GM12878 (cell line): ENCODE measurements at regions of chr5 and their contacts with region 1.

Region 1: GRCh38 chr5:71782771-71783770 is 64.0 kb downstream of the CARTPT start:
- DNase-seq: peak; percentile 60
- ATAC-seq: peak; percentile 95
- H3K4me3 ChIP-seq: peak overlapping the region; percentile 1; the same call in 1 of the 2 replicates
- H3K27ac ChIP-seq: no peak overlapping the region; the same call in 1 of the 2 replicates
- H3K4me1 ChIP-seq: peaks cover 15% of the 10 kb centered on the region
- H3K27me3 ChIP-seq: no peaks in the 10 kb centered on the region; a peak in 1 of 4 replicates
- CTCF ChIP-seq: peak; percentile 61 to 71 (median 70)
- EP300 ChIP-seq: no peak; a peak in 1 of 4 replicates
- POLR2A ChIP-seq: no peak
- RAD21 ChIP-seq: peak; percentile 72

Region 2: DNA sequence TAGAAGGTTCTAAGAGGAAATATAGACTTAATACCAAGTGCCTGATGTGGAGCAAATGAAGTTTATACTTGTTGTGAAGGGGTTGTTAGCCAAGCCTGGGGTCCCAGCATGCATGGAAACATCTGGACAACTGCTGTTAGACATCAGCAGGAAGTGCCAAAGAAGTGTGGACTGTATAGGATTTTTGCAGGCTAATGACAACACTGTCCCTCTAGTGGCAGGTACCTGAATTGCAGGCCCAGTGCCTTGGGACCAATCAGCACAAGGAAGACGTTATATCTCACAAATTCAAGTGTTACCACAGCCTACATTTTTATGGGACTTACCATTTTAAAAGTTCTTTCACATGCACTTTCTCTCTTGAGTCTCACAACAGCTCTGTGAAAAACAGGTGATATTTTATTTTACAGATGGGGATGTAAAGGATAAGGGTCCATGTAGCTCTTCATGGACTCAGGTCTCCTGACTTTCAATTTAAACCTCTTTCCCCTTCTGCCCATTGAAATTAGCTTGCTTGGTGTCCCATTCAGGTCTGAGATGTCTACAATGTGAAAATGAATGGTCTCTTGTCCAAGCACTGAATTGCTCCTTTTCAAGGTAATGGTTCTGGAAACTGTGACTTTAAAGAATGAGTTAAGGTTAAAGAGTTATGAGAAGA is 235.2 kb after region 1 on chr5:
- CTCF ChIA-PET with region 1: interaction called, 11 read pairs
- POLR2A ChIA-PET with region 1: no interaction called
- RAD21 ChIA-PET with region 1: no interaction called
- SMC1A ChIA-PET with region 1: no interaction called
- in situ Hi-C with region 1: no loop called
- intact Hi-C with region 1: loop called (anchors 2 kb)
- DNase-seq: peak; percentile 26
- ATAC-seq: peak; percentile 85
- H3K4me3 ChIP-seq: no peak overlapping the region
- H3K27ac ChIP-seq: no peak overlapping the region
- H3K4me1 ChIP-seq: no peaks in the 10 kb centered on the region
- H3K27me3 ChIP-seq: no peaks in the 10 kb centered on the region; a peak in 2 of 4 replicates
- CTCF ChIP-seq: peak; percentile 73 to 98 (median 98)
- EP300 ChIP-seq: no peak
- POLR2A ChIP-seq: no peak
- RAD21 ChIP-seq: peak; percentile 63